Heart left ventricle (tissue), 16 donors: ENCODE measurements at regions of chr20 and their contacts with region 1.

Region 1: DNA sequence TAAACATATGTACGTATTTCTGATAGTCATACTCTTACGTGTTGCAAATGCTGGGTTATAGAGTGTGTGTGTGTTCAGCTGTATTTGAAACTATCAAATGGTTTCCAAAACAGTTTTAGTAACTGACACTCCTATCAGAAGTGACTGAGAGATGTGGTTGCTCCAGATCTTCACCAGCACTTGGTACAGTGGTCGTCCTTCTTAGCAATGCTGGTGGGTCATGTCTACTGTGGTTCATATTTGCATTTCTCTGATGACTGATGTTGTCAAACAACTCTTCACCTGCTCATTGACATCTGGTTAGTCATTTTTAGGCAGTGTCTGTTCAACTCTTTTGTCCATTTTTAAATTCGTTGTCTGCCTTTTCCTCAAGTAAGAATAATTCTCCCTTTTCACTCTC is 259.3 kb downstream of the KIF16B start:
- DNase-seq: no peak
- ATAC-seq: no peak
- H3K4me3 ChIP-seq: no peak overlapping the region
- H3K27ac ChIP-seq: no peak overlapping the region
- H3K4me1 ChIP-seq: peaks cover 0 to 11% (median 0%) of the 10 kb centered on the region in 12 donors
- H3K27me3 ChIP-seq: no peaks in the 10 kb centered on the region
- CTCF ChIP-seq: no peak
- POLR2A ChIP-seq: no peak

Region 2: GRCh38 chr20:16327606-16328005 is 13.7 kb after region 1 on chr20:
- intact Hi-C with region 1: loop called in 1 of 10 experiments (anchors 2 kb)
- DNase-seq: no peak
- ATAC-seq: peak; percentile 64 to 84 (median 78)
- H3K4me3 ChIP-seq: no peak overlapping the region
- H3K27ac ChIP-seq: no peak overlapping the region
- H3K4me1 ChIP-seq: peaks cover 0 to 5% (median 0%) of the 10 kb centered on the region in 12 donors
- H3K27me3 ChIP-seq: no peaks in the 10 kb centered on the region
- CTCF ChIP-seq: no peak
- POLR2A ChIP-seq: no peak